ENCODE measurements at regions of chr12 and their contacts with region 1.

Region 1: GRCh38 chr12:51871126-51871525 is 16.8 kb upstream of the ANKRD33 start:
- DNase-seq: no peak
- ATAC-seq: no peak
- H3K4me3 Mint-ChIP-seq: no peak overlapping the region
- H3K27ac Mint-ChIP-seq: no peak overlapping the region
- H3K4me1 Mint-ChIP-seq: peaks cover 63% of the 10 kb centered on the region
- H3K27me3 Mint-ChIP-seq: peaks cover 48% of the 10 kb centered on the region
- CTCF ChIP-seq: no peak

Region 2: DNA sequence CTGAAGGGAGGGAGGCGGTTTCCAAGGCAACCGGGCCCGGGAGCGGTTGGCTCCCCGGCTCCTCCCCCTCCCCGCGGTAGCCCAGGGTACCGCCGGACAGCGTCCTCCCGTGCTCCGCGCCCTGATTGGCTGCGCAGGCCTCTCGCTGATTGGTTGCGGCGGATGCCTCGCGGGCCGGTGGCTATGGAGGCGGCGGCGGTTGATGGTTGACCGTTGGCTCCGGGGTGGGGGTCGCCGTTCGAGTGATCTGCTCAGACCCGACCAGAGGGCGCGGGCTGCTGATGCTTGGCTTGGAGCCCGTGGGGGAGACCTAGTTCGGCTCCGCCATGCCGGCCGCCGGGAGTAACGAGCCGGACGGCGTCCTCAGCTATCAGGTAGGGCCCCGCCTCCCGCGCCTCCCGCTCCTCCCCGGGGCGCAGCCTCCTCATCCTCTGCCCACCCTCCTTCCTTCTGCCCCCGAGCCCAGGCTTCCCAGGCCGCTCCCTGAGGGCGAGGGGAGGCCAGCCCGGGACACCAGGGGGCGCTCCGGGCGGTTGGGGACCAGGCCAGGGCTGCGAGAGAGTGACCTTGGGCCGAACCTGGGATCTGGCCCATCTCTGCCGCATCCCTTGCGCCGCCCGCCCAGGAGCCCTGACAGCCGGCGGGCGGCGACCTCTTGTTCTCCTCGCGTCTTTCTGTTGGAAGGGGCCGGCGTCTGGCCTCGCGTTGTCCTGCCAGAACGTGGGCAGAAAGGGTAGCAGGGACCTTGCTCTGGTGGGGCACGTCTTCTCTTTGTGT is 446.3 kb before region 1 on chr12 and contains the start of gene SLC4A8:
- CTCF ChIA-PET with region 1: interaction called, 25 read pairs
- POLR2A ChIA-PET with region 1: no interaction called
- DNase-seq: peak; percentile 99
- ATAC-seq: peak; percentile 92
- H3K4me3 Mint-ChIP-seq: peak within 1 kb of the TSS; percentile 77
- H3K27ac Mint-ChIP-seq: no peak within 1 kb of the TSS
- H3K4me1 Mint-ChIP-seq: peaks cover 38% of the 10 kb centered on the region
- H3K27me3 Mint-ChIP-seq: no peaks in the 10 kb centered on the region
- CTCF ChIP-seq: peak; percentile 62
- total RNA-seq, gene SLC4A8: 13.1 to 23.5 TPM (median 16.9 TPM) in 3 replicates

Region 3: DNA sequence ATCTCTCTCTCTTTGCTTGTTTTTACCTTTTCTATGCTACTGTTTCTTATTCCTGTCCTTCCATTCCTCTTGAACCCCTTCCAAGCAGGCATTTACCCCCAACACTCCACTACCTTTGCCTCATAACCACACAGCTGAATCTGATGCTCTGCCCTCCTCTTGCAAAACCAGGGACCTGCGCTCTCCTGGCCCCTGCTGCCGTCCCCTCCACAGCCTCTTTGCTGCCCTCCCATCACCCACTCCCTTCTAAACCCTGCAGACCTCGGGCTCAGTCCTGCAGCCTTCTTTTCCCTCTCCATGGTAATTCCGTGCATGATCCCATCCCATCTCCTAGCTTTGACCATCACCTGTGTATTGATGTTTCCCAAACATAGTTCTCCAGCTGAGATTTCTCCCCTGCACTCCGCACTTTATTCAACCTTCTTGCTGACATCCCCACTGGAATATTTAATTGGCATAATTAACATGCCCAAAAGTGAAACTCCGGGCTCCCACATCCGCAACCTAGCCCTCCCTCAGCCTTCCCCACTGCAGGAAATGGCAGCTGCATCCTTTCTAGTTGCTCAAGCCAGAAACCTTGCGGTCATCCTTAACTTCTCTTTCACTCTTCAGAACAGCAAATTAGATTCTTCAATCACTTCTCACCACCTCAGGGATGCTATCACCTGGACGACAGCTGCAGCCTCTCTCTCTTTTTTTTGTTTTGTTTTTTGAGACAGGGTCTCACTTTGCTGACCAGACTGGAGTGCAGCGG is 38.6 kb before region 1 on chr12:
- CTCF ChIA-PET with region 1: interaction called, 49 read pairs
- POLR2A ChIA-PET with region 1: no interaction called
- DNase-seq: no peak
- ATAC-seq: no peak
- H3K4me3 Mint-ChIP-seq: no peak overlapping the region
- H3K27ac Mint-ChIP-seq: no peak overlapping the region
- H3K4me1 Mint-ChIP-seq: peaks cover 76% of the 10 kb centered on the region
- H3K27me3 Mint-ChIP-seq: peaks cover 4% of the 10 kb centered on the region; the same call in 1 of the 2 replicates
- CTCF ChIP-seq: no peak

Region 4: DNA sequence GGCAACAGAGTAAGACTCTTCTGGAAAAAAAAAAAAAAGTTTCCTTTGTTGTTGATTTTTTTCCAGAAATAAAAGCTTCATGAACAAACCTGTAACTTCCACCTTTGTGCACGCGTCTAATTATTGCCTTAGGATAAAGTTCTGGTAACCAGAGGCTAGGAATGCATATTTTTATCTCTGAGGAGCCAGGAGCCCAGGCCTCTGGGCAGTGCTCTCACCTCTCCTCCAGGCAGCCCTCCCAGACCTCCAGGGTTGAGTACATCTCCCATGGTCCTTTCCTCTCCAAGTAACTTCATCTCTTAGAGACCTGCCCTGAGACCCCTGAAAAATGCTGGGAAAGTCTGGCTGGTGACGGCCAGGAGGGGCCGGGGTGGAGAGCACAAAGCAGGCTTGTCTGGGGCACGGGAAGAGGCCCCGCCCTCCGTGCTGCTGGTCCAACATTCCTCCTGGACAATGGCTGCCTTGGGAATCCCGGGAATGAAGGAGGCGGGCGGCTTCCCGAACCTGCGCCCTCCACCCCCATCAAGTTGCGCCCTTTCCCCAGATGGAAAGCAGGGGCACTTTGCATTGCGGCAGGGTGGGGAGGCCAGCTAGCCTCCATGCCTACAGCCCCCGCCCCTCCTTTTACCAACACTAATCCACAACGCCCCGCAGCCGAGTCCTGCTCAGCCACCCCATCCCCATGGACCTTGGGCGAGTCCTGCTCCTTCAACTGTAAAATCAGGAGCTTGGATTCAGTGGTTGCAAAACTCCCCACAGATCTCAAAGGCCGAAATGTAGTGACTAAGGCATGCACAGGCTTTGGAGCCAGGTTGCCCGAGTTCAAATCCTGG is 15.3 kb before region 1 on chr12:
- CTCF ChIA-PET with region 1: interaction called, 23 read pairs
- POLR2A ChIA-PET with region 1: interaction called, 4 read pairs
- DNase-seq: peak; percentile 88
- ATAC-seq: peak; percentile 97
- H3K4me3 Mint-ChIP-seq: peak overlapping the region; percentile 79
- H3K27ac Mint-ChIP-seq: peak overlapping the region; percentile 93
- H3K4me1 Mint-ChIP-seq: peaks cover 38% of the 10 kb centered on the region
- H3K27me3 Mint-ChIP-seq: peaks cover 48% of the 10 kb centered on the region
- CTCF ChIP-seq: no peak

Region 5: DNA sequence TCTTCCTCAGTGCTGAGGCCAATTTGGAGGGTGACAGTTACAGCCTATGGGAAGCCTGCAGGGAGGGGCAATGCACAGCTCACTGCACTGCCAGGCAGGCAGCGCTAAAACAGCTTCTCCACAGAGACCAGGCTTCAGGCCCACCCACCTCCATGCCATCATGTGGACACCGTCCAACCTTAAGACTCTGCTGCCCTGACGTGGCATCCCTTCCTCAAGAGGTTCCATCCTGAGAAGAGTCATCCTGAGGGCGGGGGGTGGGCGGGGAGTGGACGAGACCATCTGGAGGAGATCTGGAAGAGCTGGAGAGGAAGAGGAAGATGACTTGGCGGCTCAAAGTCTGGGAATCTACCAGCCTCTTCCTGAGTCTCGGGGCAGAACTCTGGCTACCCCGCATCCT is 27.8 kb after region 1 on chr12:
- CTCF ChIA-PET with region 1: interaction called, 11 read pairs
- POLR2A ChIA-PET with region 1: no interaction called
- DNase-seq: no peak
- ATAC-seq: no peak
- H3K4me3 Mint-ChIP-seq: no peak overlapping the region
- H3K27ac Mint-ChIP-seq: no peak overlapping the region
- H3K4me1 Mint-ChIP-seq: peaks cover 2% of the 10 kb centered on the region; the same call in 1 of the 2 replicates
- H3K27me3 Mint-ChIP-seq: 0 out of 2 replicates have a peak, but pooled peaks cover 2% of the 10 kb centered on the region
- CTCF ChIP-seq: no peak

Measured in WTC11 (cell line).